ENCODE measurements at regions of chr16 and their contacts with region 1.

Region 1: GRCh38 chr16:8797364-8798173 is at the starts of genes PMM2 and TMEM186:
- DNase-seq: peak; percentile 98
- H3K4me3 ChIP-seq: peak within 1 kb of the TSS; percentile 80 to 86
- H3K27ac ChIP-seq: peak within 1 kb of the TSS; percentile 66 to 72
- H3K4me1 ChIP-seq: peaks cover 10% of the 10 kb centered on the region
- H3K27me3 ChIP-seq: no peaks in the 10 kb centered on the region
- CTCF ChIP-seq: peak in 2 of 4 experiments; percentile 27 to 37
- POLR2A ChIP-seq: peak; percentile 54
- total RNA-seq, gene PMM2: 30.6 to 39.2 TPM
- total RNA-seq, gene TMEM186: 7.2 to 10.1 TPM

Region 2: DNA sequence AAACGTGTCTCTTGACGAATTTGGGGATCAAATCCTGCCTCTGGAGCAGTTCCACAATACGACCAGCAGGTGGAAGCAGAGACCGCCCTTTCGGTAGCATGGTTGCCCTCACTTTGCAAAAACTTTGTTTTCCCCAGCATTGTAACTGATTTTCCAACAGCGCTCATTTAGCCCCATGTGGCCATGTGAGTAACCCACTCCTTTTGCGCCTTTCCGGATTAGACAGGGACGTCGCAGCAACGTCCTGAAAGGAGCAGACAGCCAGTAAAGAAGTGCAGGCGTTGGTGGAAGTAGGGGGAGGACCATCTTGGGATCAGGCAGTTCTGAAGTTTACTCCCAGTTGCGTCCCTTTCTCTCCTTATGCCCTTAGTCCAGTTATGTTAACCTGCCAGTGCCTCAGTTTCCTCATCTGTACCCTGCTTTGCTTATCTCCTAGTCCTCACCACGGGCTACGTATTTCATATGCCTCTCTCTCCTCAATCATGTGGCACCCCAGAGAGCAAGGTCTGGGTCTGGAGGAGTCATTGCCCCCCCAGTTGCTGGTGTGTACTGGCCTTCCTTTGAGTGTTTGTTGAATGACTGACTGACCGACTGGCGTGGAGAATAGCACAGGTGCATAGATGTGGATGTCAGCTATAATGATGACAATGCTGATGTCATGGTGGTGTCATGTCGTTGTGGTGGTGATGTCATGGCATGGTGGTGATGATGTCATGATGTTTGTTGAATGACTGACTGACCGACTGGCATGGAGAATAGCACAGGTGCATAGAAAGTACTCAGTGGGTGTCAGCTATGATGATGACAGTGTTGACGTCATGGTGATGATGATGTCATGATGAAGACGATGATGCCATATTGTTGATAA is 229.6 kb before region 1 on chr16:
- intact Hi-C with region 1: loop called (anchors 5 kb)
- DNase-seq: peak; percentile 53
- H3K4me3 ChIP-seq: no peak overlapping the region
- H3K27ac ChIP-seq: no peak overlapping the region
- H3K4me1 ChIP-seq: no peaks in the 10 kb centered on the region
- H3K27me3 ChIP-seq: no peaks in the 10 kb centered on the region
- CTCF ChIP-seq: peak; percentile 89 to 97 (median 94)
- POLR2A ChIP-seq: no peak

Region 3: DNA sequence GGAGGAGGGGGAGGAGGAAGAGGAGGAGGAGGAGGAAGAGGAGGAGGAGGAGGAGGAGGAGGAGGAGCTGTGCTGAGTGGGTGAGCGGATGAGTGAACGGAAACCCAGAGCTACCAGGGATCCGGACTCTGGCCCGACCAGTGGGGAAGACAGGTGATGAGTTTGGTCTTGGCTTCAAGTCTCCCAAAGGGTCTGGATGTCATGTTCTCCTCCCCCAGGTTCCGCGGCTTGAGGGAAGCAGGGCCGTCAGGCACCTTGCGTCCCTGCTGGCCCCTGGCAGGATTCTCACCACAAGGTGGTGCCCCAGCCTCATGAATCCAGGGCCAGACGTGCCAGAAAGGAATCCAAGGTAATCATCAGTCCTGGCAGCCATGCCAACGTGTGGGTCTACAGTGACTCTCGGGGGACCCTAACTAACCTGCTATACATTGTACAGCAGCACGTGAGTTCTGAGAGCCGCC is 136.7 kb before region 1 on chr16:
- intact Hi-C with region 1: loop called (anchors 5 kb)
- DNase-seq: peak; percentile 61
- H3K4me3 ChIP-seq: no peak overlapping the region
- H3K27ac ChIP-seq: no peak overlapping the region
- H3K4me1 ChIP-seq: no peaks in the 10 kb centered on the region
- H3K27me3 ChIP-seq: no peaks in the 10 kb centered on the region
- CTCF ChIP-seq: peak; percentile 43 to 85 (median 73)
- POLR2A ChIP-seq: no peak

Region 4: GRCh38 chr16:8751481-8752311 is 45.9 kb before region 1 on chr16:
- intact Hi-C with region 1: no loop called
- DNase-seq: no peak
- H3K4me3 ChIP-seq: no peak overlapping the region
- H3K27ac ChIP-seq: no peak overlapping the region
- H3K4me1 ChIP-seq: no peaks in the 10 kb centered on the region
- H3K27me3 ChIP-seq: no peaks in the 10 kb centered on the region
- CTCF ChIP-seq: no peak
- POLR2A ChIP-seq: no peak

Region 5: DNA sequence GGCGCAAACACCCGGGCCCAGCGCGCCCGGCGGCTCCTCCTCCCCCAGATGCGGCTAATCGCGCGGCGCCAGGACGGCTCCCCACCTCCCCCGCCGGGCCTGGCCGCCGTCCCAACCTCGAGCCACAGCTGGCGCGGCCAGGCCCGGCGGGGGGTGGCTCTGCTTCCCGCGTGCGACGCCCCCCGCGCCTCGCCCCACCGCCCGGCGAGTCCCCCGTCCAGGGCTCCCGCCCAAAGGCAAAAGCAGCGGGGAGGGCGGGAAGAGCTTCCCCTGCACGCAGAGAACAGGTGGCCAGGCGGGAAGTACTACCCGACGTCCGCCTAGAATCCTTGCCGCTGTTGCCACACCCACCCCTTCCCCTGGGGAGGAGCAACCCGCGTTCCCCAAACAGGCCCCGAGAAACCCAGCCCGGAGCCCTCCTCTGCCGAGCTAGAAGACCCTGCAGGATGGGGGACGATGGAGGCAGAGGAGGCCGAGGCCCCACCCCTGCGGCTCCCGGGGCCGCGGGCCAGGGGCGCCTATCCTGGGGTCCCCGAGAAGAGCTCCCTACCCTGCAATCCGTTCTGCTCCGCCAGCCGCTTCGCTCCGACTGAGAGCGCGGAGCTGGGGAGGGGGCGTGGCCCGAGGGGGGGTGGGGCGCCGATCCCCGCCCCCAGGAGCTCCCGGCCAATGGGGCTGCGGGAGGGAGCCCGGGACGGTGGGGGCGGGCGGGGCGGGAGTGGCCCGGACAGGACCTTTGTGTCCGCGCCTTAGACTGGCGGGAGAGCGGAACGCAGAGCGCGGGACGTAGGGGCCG is 71.0 kb after region 1 on chr16 and contains the start of gene CARHSP1:
- intact Hi-C with region 1: loop called (anchors 5 kb)
- DNase-seq: peak; percentile 87
- H3K4me3 ChIP-seq: peak within 1 kb of the TSS; percentile 54 to 56
- H3K27ac ChIP-seq: peak within 1 kb of the TSS; percentile 66 to 78
- H3K4me1 ChIP-seq: peaks cover 11% of the 10 kb centered on the region
- H3K27me3 ChIP-seq: no peaks in the 10 kb centered on the region
- CTCF ChIP-seq: peak in 1 of 4 experiments; percentile 7
- POLR2A ChIP-seq: peak; percentile 89
- total RNA-seq, gene CARHSP1: 51.0 to 146 TPM

Region 6: GRCh38 chr16:8958344-8959167 is 161.0 kb after region 1 on chr16:
- intact Hi-C with region 1: loop called (anchors 10 kb)
- DNase-seq: no peak
- H3K4me3 ChIP-seq: no peak overlapping the region
- H3K27ac ChIP-seq: peak overlapping the region in 1 of 2 donors; percentile 38
- H3K4me1 ChIP-seq: peaks cover 21% of the 10 kb centered on the region
- H3K27me3 ChIP-seq: no peaks in the 10 kb centered on the region
- CTCF ChIP-seq: no peak
- POLR2A ChIP-seq: no peak

Measured in prostate gland (tissue), 2 donors.